Heart left ventricle (tissue), 16 donors: ENCODE measurements at regions of chr6 and their contacts with region 1.

Region 1: GRCh38 chr6:1596088-1596852 is 13.4 kb upstream of the FOXC1 start:
- DNase-seq: peak in 4 of 5 donors; percentile 38 to 72 (median 52)
- ATAC-seq: peak; percentile 69 to 90 (median 82)
- H3K4me3 ChIP-seq: peak overlapping the region in 10 of 12 donors; percentile 1 to 44 (median 26)
- H3K27ac ChIP-seq: no peak overlapping the region
- H3K4me1 ChIP-seq: peaks cover 0 to 11% (median 6%) of the 10 kb centered on the region in 12 donors
- H3K27me3 ChIP-seq: peaks cover 8 to 47% (median 21%) of the 10 kb centered on the region in 9 donors
- CTCF ChIP-seq: peak; percentile 88 to 97 (median 94)
- POLR2A ChIP-seq: no peak

Region 2: DNA sequence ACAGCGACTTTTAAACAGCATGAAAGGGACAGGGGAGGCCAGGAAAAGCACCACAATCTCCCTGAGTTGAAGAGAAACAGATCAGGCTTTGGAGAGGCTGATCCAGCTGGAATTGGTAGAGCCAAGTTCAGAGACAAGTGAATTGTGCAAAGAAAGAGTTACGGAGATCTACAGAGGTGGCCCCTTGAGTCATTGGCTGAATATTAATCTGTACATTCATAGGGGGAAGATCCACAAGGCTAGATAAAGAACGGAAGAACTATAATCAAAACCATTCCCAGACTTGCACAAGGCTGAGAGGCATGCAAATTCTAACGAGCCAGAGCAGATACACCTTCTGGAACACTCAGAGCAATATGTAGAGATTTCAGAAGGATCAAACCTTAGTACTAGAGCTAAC is 298.5 kb before region 1 on chr6:
- intact Hi-C with region 1: no loop called
- DNase-seq: no peak
- ATAC-seq: no peak
- H3K4me3 ChIP-seq: no peak overlapping the region
- H3K27ac ChIP-seq: no peak overlapping the region
- H3K4me1 ChIP-seq: no peaks in the 10 kb centered on the region
- H3K27me3 ChIP-seq: peaks cover 0 to 54% (median 14%) of the 10 kb centered on the region in 9 donors
- CTCF ChIP-seq: no peak
- POLR2A ChIP-seq: no peak

Region 3: GRCh38 chr6:2448820-2449571 is 852.7 kb after region 1 on chr6:
- intact Hi-C with region 1: loop called in 9 of 10 experiments (anchors 1 to 10 kb)
- DNase-seq: peak in 1 of 5 donors; percentile 30
- ATAC-seq: peak in 3 of 4 donors; percentile 69 to 73 (median 70)
- H3K4me3 ChIP-seq: peak overlapping the region in 1 of 12 donors; percentile 33
- H3K27ac ChIP-seq: no peak overlapping the region
- H3K4me1 ChIP-seq: peaks cover 0 to 12% (median 0%) of the 10 kb centered on the region in 12 donors
- H3K27me3 ChIP-seq: no peaks in the 10 kb centered on the region
- CTCF ChIP-seq: peak; percentile 29 to 72 (median 54)
- POLR2A ChIP-seq: no peak

Region 4: GRCh38 chr6:2695454-2696095 is 1099.3 kb after region 1 on chr6:
- intact Hi-C with region 1: loop called in 7 of 10 experiments (anchors 5 to 10 kb)
- DNase-seq: no peak
- ATAC-seq: peak in 3 of 4 donors; percentile 49 to 61 (median 60)
- H3K4me3 ChIP-seq: no peak overlapping the region
- H3K27ac ChIP-seq: no peak overlapping the region
- H3K4me1 ChIP-seq: no peaks in the 10 kb centered on the region
- H3K27me3 ChIP-seq: no peaks in the 10 kb centered on the region
- CTCF ChIP-seq: peak in 11 of 12 donors; percentile 9 to 63 (median 44)
- POLR2A ChIP-seq: no peak

Region 5: DNA sequence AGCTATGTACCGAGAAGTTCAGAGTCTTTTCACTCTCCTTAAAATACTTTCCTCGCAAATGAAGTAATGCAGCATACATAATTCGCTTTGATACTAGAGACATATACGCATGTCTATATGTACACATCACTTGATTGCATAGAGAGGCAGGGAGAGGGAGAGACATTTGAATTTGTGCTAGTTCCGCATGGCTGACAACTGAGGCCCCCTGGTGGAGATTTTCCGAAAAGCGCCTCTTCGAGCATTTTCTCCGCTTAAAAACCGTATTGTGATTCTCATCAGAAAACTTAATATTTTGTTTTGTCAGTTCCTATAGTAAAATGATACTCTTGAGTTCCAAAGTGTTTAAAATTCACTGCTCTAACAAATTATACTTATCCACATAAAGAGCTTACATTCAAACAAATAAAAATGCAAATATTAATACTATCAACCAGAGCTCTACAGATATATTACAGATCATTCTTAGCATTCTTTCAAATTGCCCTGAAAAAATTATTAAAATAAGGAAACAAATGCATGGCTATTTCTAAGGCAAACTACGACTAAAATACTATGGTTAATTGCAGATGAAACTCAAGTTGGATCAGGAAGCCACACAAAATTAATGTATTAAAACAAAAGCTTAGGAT is 1153.8 kb after region 1 on chr6:
- intact Hi-C with region 1: loop called in 8 of 10 experiments (anchors 2 to 10 kb)
- DNase-seq: peak in 3 of 5 donors; percentile 43 to 61 (median 49)
- ATAC-seq: peak; percentile 20 to 70 (median 58)
- H3K4me3 ChIP-seq: peak overlapping the region in 8 of 12 donors; percentile 2 to 41 (median 20)
- H3K27ac ChIP-seq: peak overlapping the region in 1 of 12 donors; percentile 11
- H3K4me1 ChIP-seq: peaks cover 0 to 15% (median 9%) of the 10 kb centered on the region in 12 donors
- H3K27me3 ChIP-seq: no peaks in the 10 kb centered on the region
- CTCF ChIP-seq: peak; percentile 82 to 95 (median 86)
- POLR2A ChIP-seq: no peak